ENCODE measurements at regions of chrX and their contacts with region 1.

Region 1: GRCh38 chrX:86806788-86807187 is 658.5 kb downstream of the DACH2 start:
- H3K4me3 ChIP-seq: no peak overlapping the region
- H3K27ac ChIP-seq: no peak overlapping the region
- H3K4me1 ChIP-seq: no peaks in the 10 kb centered on the region
- CTCF ChIP-seq: no peak

Region 2: GRCh38 chrX:85516131-85516530 is 1290.7 kb before region 1 on chrX:
- CTCF ChIA-PET with region 1: no interaction called
- POLR2A ChIA-PET with region 1: no interaction called
- H3K4me3 ChIP-seq: no peak overlapping the region
- H3K27ac ChIP-seq: no peak overlapping the region
- H3K4me1 ChIP-seq: no peaks in the 10 kb centered on the region
- CTCF ChIP-seq: no peak

Region 3: GRCh38 chrX:86829786-86830185 is 23.0 kb after region 1 on chrX:
- CTCF ChIA-PET with region 1: no interaction called
- POLR2A ChIA-PET with region 1: no interaction called
- H3K4me3 ChIP-seq: no peak overlapping the region
- H3K27ac ChIP-seq: no peak overlapping the region
- H3K4me1 ChIP-seq: no peaks in the 10 kb centered on the region
- CTCF ChIP-seq: no peak

Region 4: DNA sequence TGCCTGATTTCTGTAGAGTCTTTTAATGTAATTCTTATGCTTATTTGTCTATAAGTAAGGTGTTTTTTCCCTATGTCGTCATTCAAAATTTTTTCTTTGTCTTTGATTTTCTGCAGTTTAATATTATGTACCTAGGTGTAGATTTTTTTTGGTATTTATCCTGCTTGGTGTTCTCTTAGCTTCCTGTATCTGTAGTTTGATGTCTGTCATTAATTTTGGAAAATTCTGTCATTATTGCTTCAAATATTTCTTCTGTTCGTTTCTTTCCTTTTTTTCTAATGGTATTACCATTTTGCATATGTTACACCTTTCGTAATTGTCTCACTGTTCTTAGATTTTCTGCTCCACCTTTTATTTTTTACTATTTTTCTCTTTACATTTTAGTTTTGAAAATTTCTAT is 38.3 kb after region 1 on chrX:
- CTCF ChIA-PET with region 1: no interaction called
- POLR2A ChIA-PET with region 1: no interaction called
- H3K4me3 ChIP-seq: no peak overlapping the region
- H3K27ac ChIP-seq: no peak overlapping the region
- H3K4me1 ChIP-seq: no peaks in the 10 kb centered on the region
- CTCF ChIP-seq: no peak

Region 5: GRCh38 chrX:86946569-86946968 is 139.8 kb after region 1 on chrX:
- CTCF ChIA-PET with region 1: interaction called, 18 read pairs
- POLR2A ChIA-PET with region 1: no interaction called
- H3K4me3 ChIP-seq: no peak overlapping the region
- H3K27ac ChIP-seq: no peak overlapping the region
- H3K4me1 ChIP-seq: no peaks in the 10 kb centered on the region
- CTCF ChIP-seq: no peak

Region 6: DNA sequence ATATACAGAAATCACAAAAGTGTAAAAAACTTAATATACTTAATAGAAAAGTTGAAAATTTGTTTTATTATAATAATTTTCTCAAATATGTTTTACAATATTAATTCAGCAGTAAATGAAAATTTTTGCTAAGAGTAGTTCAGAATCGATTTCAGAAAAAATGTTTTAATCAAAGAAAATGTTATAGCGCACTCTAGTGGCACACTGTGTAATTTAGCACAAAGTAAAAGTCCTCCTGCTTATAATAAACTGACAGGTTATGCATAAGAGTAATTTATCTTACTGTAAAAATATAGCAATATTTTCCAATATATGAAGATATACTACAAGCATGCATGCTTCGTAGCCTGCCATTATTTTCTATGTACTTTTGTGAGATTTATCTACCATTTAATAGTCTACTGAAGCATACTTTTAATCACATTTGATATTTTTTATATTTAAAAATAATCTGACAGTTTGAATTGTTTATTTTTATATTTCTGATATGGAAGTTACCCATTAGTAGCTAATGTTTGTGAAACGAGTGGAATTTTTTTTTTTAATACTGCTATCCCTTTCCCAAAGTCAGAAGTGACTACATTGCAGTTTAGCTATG is 492.9 kb after region 1 on chrX:
- CTCF ChIA-PET with region 1: interaction called, 11 read pairs
- POLR2A ChIA-PET with region 1: no interaction called
- H3K4me3 ChIP-seq: no peak overlapping the region
- H3K27ac ChIP-seq: no peak overlapping the region
- H3K4me1 ChIP-seq: no peaks in the 10 kb centered on the region
- CTCF ChIP-seq: no peak